ENCODE measurements at regions of chr22 and their contacts with region 1.

Region 1: GRCh38 chr22:29202212-29203192 is 3.2 kb upstream of the EMID1 start:
- DNase-seq: peak; percentile 80
- H3K4me3 Mint-ChIP-seq: no peak overlapping the region
- H3K27ac Mint-ChIP-seq: no peak overlapping the region
- H3K4me1 Mint-ChIP-seq: peaks cover 12% of the 10 kb centered on the region
- H3K27me3 Mint-ChIP-seq: peaks cover 42% of the 10 kb centered on the region

Region 2: DNA sequence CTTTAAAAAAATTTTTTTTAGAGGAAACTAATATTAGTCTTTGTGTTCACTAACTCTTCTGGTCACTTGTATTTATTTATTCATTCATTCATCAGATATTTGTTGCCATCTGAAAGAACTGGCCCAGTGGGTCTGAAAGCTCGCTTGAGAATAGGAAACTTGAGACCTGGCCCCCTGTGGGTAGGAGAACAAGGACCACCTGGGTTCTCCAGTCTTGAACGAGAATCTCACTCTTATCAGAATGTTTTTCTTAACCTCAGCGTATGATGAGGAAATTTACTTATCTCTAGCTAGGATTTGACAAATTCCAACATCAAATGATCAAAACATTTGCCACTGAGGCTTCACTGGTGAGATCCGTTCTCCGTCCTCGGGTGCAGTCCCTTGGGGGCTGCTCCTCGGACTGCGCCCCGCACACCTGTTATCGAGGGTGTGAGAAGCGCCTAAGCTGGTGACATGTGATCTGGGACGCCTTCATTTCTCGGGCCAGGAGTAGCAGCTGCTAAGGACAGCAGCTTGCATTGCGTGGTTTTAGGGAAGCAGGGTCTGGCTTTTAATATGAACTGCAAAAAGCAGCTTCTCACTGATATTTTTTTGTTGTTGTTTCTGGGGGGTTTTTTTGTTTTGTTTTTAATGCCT is 147.2 kb before region 1 on chr22:
- CTCF ChIA-PET with region 1: no interaction called
- POLR2A ChIA-PET with region 1: no interaction called
- intact Hi-C with region 1: no loop called
- DNase-seq: no peak
- H3K4me3 Mint-ChIP-seq: no peak overlapping the region
- H3K27ac Mint-ChIP-seq: no peak overlapping the region
- H3K4me1 Mint-ChIP-seq: no peaks in the 10 kb centered on the region
- H3K27me3 Mint-ChIP-seq: peaks cover 1% of the 10 kb centered on the region

Region 3: DNA sequence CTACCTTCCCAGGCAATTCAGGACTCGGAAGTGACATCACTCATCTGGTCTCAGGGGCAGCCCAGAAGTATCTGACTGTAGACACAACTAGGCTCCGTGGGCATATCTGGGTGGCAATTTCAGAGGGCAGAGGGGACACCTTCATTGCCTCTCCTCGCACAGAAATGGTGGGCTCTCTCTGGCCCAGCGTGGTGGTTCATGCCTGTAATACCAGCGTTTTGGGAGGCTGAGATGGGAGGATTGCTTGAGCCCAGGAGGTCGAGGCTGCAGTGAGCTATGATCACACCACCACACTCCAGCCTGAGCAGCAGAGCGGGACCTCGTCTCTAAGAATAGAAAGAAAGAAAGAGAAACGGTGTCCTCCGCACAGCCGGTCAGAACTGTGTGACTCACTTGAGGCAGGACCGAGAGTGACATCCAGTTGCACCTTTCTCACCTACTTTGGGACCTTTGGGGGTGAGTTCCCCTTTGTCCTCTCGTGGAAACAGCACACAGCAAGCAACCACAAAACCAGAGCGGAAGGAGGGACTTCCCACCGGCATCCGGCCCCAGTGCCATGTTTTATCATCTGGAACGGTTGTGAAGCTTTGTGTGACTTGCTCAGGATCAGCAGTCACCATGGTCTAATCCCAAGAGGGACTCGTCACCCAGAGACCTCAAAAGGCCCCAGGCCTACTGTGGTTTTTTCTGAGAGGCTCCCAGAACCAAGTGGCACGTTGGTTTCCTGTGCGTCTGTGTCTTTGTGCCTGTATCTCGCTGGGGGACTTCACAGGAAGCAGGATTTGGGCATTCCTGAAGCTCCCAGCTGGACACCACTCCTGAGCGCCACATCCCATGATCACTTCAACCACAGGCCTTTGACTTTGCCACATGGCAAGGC is 35.2 kb before region 1 on chr22:
- CTCF ChIA-PET with region 1: interaction called, 4 read pairs
- POLR2A ChIA-PET with region 1: no interaction called
- intact Hi-C with region 1: loop called (anchors 2 kb)
- DNase-seq: peak; percentile 87
- H3K4me3 Mint-ChIP-seq: peak overlapping the region; percentile 32
- H3K27ac Mint-ChIP-seq: peak overlapping the region; percentile 54
- H3K4me1 Mint-ChIP-seq: peaks cover 19% of the 10 kb centered on the region
- H3K27me3 Mint-ChIP-seq: peaks cover 6% of the 10 kb centered on the region

Region 4: DNA sequence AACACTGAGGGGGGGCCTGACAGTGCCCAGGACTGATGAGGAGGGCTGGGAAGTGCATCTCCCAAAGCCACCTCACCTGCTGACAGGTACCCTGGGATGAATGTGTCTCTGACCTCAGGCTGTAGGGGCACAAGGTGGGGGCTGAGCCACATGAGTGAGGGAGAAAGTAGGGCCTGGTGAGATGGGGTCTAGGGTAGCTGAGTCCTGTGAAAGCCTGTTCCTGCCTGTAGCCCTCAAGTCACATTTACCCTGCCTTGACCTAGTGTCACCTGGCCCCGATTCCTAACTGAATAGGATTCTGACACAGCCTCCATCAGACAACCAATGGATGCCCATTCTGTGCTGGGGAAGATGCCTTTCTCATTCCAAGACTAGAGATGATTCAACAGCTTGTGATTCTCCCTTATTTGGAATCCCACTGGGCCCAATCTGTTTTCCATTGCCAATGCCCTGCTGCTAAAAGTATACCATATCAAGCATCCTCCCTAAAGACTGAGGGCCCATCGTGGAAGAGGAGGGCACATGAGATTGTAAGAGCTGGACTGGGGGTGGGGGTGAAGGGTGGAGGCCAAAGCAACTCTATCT is 224.8 kb after region 1 on chr22:
- CTCF ChIA-PET with region 1: no interaction called
- POLR2A ChIA-PET with region 1: no interaction called
- intact Hi-C with region 1: no loop called
- DNase-seq: no peak
- H3K4me3 Mint-ChIP-seq: no peak overlapping the region
- H3K27ac Mint-ChIP-seq: no peak overlapping the region
- H3K4me1 Mint-ChIP-seq: no peaks in the 10 kb centered on the region
- H3K27me3 Mint-ChIP-seq: peaks cover 2% of the 10 kb centered on the region